Panc1 (cell line): ENCODE measurements at regions of chr4 and their contacts with region 1.

Region 1: DNA sequence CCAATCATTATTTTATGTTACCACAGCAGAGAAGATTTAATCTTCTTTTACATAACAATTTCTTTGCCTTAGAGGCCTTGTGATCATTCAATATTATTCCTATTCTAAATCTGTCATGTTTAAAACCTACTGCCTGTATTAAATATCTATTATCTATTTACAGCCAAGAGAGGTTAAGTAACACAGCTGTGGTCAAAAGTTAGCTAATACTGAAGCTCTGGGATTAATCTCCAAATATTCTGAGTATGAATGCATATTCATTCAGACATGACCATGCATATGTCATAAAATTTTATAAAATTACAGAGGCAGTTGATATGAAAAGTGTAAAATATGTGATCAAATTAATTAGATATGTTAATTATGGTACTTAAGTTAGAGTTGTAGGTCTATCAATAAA is 187.9 kb upstream of the MAB21L2 start:
- DNase-seq: no peak
- ATAC-seq: no peak
- H3K4me3 ChIP-seq: no peak overlapping the region
- H3K27ac ChIP-seq: no peak overlapping the region
- H3K4me1 ChIP-seq: no peaks in the 10 kb centered on the region
- H3K27me3 ChIP-seq: no peaks in the 10 kb centered on the region
- CTCF ChIP-seq: no peak

Region 2: GRCh38 chr4:150960818-150961217 is 566.8 kb after region 1 on chr4:
- CTCF ChIA-PET with region 1: no interaction called
- POLR2A ChIA-PET with region 1: interaction called, 13 read pairs
- in situ Hi-C with region 1: no loop called
- intact Hi-C with region 1: no loop called
- DNase-seq: no peak
- ATAC-seq: peak; percentile 69; the same call in 1 of the 2 replicates
- H3K4me3 ChIP-seq: no peak overlapping the region
- H3K27ac ChIP-seq: no peak overlapping the region
- H3K4me1 ChIP-seq: no peaks in the 10 kb centered on the region
- H3K27me3 ChIP-seq: no peaks in the 10 kb centered on the region
- CTCF ChIP-seq: peak; percentile 64